HEK293T (cell line): ENCODE measurements at regions of chr7 and their contacts with region 1.

Region 1: GRCh38 chr7:116929914-116930913 is 23.1 kb upstream of the ST7 start:
- DNase-seq: peak; percentile 82

Region 2: GRCh38 chr7:116786791-116787443 is 143.3 kb before region 1 on chr7:
- CTCF ChIA-PET with region 1: no interaction called
- POLR2A ChIA-PET with region 1: no interaction called
- DNase-seq: peak; percentile 17

Region 3: DNA sequence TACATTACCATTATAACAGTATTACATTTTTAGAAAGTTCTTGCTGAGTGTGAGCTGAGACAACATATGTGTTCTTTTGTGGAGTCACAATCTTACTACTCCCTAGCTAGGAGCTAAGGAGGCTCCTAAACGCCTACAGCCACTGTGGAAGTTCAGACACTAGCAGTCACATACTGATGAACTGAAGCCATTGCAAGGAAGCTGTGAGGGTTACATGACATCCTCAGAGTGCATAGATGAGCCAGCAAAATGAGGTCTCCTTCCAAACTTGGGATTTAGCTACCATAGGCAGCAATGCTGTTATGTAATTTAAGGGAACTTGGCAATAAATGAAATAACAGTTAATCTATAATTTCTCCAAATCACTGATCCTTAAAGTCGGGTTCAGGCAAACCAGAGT is 12.3 kb after region 1 on chr7:
- CTCF ChIA-PET with region 1: interaction called, 14 read pairs
- POLR2A ChIA-PET with region 1: no interaction called
- DNase-seq: no peak

Region 4: GRCh38 chr7:118040562-118040961 is 1110.3 kb after region 1 on chr7:
- CTCF ChIA-PET with region 1: no interaction called
- POLR2A ChIA-PET with region 1: no interaction called
- DNase-seq: no peak